Caki2 (cell line): ENCODE measurements at regions of chr5 and their contacts with region 1.

Region 1: DNA sequence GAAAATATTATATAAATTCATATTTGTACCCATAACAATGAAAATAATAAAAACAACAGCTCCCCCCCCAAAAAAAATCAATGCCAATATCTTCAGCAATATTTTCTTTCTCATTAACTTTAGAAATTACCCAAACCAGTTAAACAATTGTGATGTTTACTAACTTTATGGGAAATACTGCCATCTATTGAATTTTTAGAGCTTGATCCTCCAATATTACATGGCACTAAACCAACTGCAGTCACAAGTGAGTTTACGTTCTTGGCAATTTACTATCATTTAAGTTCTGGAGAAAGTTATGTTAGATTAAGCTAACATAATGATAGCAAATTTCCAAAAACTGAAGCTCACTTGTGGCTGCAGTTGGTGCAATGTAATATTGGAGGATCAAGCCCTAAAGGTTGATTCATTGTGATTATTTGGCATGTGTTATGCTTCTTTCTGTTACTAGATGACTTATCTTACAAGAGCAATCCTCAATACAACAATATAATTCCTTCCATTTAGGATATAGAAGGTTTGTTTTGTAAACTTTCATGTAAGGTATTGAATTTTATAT is 379.5 kb downstream of the CDH18 start:
- DNase-seq: peak; percentile 6

Region 2: DNA sequence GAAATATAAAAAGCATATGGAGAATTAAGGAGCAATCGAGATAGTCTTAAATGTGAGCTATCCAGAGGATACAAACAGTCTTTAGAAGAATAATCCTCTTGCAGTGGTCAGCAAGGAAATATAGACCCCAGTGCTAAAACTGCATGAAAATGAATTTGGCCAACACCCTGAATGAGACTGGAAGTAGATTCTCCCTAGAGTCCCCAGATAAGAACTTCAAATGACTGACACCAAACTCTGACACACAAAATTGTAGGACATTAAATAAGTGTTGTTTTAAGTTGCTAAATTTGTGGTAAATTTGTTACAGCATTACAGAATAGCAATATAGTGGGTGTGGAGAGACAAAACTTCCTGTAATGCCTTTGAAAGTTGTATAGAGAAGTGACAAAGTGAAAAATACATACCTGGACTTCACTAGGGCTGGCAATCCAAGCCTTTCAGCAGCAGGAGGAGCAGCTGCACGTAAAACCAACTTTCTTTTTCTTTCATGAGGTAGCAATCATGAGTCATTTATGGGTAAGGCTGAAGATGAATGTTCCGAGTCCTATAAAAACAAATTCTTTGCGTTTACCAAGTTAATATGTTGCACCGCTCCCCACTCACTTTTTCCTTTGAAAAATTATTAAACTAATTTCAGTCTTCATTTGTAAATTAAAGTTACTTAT is 836.2 kb before region 1 on chr5:
- in situ Hi-C with region 1: loop called (anchors 25 kb)
- DNase-seq: peak; percentile 73

Region 3: GRCh38 chr5:19853616-19854240 is 245.2 kb after region 1 on chr5:
- in situ Hi-C with region 1: no loop called
- DNase-seq: no peak

Region 4: GRCh38 chr5:19920761-19921160 is 312.2 kb after region 1 on chr5:
- in situ Hi-C with region 1: no loop called
- DNase-seq: no peak